AG04450 (cell line): ENCODE measurements at regions of chr20 and their contacts with region 1.

Region 1: GRCh38 chr20:38221119-38221589 is 39.4 kb downstream of the KIAA1755 start:
- DNase-seq: no peak
- H3K4me3 ChIP-seq: 0 out of 2 replicates have a peak overlapping the region, but pooled peaks have one; percentile 29
- H3K27ac ChIP-seq: no peak overlapping the region
- H3K27me3 ChIP-seq: no peaks in the 10 kb centered on the region
- CTCF ChIP-seq: peak; percentile 96

Region 2: DNA sequence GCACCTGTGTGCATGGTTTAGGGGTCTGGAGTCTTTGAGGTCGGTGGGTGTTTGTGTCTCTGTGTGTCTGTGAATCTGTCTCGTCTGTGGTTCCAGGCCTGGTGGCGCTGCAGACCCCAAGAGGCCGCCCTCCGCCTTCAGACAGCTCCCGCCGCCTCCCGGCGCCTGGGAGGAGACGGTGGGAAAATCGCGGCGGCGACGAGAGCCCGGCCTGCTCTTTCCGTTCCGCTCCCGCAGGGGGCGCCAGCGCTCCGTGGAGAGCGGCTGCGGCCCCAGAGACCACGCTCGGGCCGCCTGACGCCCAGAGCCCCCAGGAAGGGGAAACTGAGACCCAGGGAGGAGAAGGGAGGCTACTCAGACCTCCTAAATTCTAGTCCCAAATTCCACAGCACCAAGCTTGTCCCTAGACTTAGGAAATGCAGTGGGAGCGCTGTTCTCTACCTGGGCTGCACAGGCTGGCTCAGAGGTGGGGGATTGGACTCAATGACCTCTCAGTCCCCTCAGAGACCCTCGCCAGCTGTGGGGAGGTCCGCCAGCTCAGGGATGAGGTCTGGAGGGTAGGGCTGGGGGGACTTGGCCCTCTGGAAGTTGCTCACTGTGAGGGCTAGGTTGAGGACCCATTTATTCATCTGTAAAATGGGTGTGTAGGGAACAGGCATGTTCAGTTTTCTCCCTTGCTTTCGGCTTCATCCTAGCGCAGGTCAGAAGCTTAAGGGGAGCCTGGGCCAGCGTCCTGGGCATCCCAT is 656.6 kb before region 1 on chr20:
- CTCF ChIA-PET with region 1: interaction called, 46 read pairs
- POLR2A ChIA-PET with region 1: no interaction called
- DNase-seq: no peak
- H3K4me3 ChIP-seq: no peak overlapping the region
- H3K27ac ChIP-seq: no peak overlapping the region
- H3K27me3 ChIP-seq: peaks cover 53% of the 10 kb centered on the region
- CTCF ChIP-seq: peak; percentile 90

Region 3: DNA sequence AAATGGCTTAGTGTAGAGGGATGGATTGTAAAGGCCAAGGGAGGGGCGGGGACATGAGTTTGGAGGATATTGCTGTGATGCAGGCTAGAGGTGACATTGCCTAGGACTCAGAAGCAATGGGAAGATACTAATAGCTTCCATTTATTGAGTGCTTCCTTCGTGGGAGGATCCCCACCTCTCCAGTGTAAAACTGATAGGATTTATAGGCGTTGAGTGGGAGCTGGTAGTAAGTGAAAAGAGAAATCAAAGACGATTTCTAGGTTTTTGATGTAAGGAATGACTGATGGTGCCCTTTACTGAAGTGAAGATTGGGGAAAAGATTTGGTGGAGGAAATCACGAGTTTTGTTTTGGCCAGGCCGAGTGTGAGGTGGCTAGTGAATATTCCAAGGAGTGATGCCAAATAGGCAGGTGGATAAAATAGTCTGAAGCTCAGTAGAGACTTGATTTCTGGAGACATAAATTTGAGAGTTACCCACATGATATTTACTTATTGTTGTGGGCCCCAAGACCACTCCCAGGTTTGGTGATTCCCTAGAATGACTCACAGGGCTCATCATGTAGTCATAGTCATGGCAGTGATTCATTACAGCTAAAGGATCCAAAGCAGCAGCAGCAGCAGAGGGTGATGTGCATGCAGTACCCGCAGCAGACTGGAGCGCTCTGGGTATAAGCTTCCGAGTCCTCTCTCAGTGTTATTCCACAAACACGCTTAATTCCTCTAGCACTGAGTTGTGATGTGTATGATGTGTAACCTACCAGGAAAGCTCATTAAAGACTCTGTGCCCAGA is 177.4 kb before region 1 on chr20:
- CTCF ChIA-PET with region 1: interaction called, 459 read pairs
- POLR2A ChIA-PET with region 1: no interaction called
- DNase-seq: no peak
- H3K4me3 ChIP-seq: no peak overlapping the region
- H3K27ac ChIP-seq: no peak overlapping the region
- H3K27me3 ChIP-seq: no peaks in the 10 kb centered on the region
- CTCF ChIP-seq: no peak

Region 4: DNA sequence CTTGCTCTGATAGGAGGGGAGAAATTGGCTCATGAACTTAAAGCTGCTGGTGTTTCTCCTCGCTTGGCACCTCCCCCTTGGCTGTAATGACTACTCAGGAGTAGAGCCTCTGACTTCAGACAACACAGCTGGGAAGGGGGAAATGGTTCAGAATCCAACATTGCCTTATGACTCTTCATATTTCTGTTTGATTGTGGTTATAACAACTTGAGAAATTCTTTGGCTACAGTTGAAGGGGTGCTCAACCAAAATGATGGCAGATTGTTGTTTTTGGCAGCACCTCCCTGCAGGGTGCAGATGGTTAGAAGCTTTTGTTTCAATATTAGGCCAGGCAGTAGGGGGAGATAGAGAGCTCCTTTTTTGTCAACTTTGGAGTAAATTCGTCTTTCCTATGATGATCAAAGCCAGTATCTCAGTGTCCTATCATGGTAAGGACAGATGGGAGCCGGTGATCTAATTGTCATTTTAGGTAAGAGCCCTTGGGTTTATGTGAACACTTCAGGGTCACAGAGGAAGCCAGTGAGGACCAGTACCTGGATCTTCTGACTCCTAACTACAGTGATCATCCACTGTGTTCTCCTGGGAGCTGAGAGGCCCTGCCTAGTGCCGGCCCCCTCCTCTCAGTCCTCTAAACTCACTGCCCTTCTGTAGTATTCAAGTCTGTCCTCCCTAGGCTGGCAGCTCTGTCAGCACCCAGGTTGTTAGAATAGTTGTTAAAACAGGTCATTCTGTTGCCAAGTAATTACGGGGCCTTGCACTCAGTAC is 147.7 kb before region 1 on chr20:
- CTCF ChIA-PET with region 1: interaction called, 130 read pairs
- POLR2A ChIA-PET with region 1: interaction called, 14 read pairs
- DNase-seq: peak; percentile 93
- H3K4me3 ChIP-seq: no peak overlapping the region; the same call in 1 of the 2 replicates
- H3K27ac ChIP-seq: peak overlapping the region; percentile 60
- H3K27me3 ChIP-seq: no peaks in the 10 kb centered on the region
- CTCF ChIP-seq: peak; percentile 87

Region 5: GRCh38 chr20:38165089-38165989 is 55.8 kb before region 1 on chr20 and contains the start of gene TGM2:
- CTCF ChIA-PET with region 1: interaction called, 42 read pairs
- POLR2A ChIA-PET with region 1: interaction called, 4 read pairs
- DNase-seq: no peak
- H3K4me3 ChIP-seq: peak within 1 kb of the TSS; percentile 70
- H3K27ac ChIP-seq: peak within 1 kb of the TSS; percentile 47
- H3K27me3 ChIP-seq: no peaks in the 10 kb centered on the region
- CTCF ChIP-seq: peak; percentile 77
- polyA plus RNA-seq, gene TGM2: 326 and 398 TPM in 2 replicates

Region 6: GRCh38 chr20:38210741-38211140 is 10.4 kb before region 1 on chr20:
- CTCF ChIA-PET with region 1: interaction called, 57 read pairs
- POLR2A ChIA-PET with region 1: no interaction called
- DNase-seq: no peak
- H3K4me3 ChIP-seq: no peak overlapping the region
- H3K27ac ChIP-seq: peak overlapping the region; percentile 31
- H3K27me3 ChIP-seq: no peaks in the 10 kb centered on the region
- CTCF ChIP-seq: no peak

Region 7: GRCh38 chr20:38262931-38263330 is 41.8 kb after region 1 on chr20:
- CTCF ChIA-PET with region 1: no interaction called
- POLR2A ChIA-PET with region 1: no interaction called
- DNase-seq: no peak
- H3K4me3 ChIP-seq: no peak overlapping the region
- H3K27ac ChIP-seq: no peak overlapping the region
- H3K27me3 ChIP-seq: no peaks in the 10 kb centered on the region
- CTCF ChIP-seq: no peak

Region 8: DNA sequence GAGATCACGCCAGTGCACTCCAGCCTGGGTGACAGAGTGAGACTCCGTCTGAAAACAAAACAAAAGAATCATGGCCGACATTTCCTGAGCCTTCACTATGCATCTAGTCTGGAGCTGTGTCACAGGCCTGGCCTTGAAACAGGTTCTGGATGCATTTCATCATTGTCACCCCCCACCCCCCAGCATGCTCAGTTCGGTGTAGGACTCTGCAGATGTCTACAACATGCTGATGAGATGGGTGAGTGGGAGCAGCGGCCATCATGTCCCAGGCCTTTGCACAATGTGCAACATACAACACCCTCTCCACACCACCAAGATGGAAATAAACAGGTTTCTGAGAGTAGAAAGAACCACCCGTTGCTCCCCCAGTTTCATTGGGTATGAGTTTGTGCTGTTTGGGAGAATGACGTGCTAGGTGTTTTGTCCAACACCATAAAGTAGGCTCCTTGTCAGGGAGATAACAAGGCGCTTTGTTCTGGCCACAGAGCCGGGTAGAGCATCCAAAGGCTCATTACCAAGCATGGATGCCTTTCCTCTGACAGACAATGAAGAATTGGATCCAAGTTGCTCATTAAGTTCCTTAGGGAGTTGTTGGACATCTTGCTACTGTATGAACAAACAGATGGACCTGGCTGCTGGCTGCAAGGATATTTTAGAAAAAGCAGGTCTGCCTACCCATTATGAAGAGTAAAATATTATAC is 191.9 kb after region 1 on chr20:
- CTCF ChIA-PET with region 1: interaction called, 16 read pairs
- POLR2A ChIA-PET with region 1: interaction called, 3 read pairs
- DNase-seq: no peak
- H3K4me3 ChIP-seq: no peak overlapping the region
- H3K27ac ChIP-seq: no peak overlapping the region
- H3K27me3 ChIP-seq: no peaks in the 10 kb centered on the region
- CTCF ChIP-seq: no peak